ENCODE measurements at regions of chr10 and their contacts with region 1.

Region 1: DNA sequence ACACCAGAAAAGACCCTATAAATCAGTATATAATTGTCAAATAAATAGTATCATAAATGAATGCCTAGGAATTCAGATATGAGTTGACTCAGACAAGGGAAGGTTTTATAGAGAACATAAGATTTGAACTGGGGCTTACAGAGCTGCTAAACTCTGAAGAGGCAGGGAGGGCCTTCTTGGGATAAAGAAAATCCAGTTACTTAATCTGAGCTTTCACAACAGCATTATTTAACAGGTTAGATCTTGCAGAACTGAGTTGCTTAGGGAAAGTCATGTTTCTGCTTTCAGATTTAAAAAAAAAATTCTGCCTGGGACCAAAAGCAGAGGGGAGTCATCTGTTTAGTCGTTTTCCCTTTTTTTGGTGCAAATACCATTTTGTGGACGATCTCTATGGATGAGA is 594.8 kb upstream of the FZD8 start:
- DNase-seq: peak; percentile 28
- H3K4me3 ChIP-seq: no peak overlapping the region
- H3K27ac ChIP-seq: no peak overlapping the region
- H3K4me1 ChIP-seq: no peaks in the 10 kb centered on the region
- H3K27me3 ChIP-seq: no peaks in the 10 kb centered on the region
- CTCF ChIP-seq: no peak

Region 2: DNA sequence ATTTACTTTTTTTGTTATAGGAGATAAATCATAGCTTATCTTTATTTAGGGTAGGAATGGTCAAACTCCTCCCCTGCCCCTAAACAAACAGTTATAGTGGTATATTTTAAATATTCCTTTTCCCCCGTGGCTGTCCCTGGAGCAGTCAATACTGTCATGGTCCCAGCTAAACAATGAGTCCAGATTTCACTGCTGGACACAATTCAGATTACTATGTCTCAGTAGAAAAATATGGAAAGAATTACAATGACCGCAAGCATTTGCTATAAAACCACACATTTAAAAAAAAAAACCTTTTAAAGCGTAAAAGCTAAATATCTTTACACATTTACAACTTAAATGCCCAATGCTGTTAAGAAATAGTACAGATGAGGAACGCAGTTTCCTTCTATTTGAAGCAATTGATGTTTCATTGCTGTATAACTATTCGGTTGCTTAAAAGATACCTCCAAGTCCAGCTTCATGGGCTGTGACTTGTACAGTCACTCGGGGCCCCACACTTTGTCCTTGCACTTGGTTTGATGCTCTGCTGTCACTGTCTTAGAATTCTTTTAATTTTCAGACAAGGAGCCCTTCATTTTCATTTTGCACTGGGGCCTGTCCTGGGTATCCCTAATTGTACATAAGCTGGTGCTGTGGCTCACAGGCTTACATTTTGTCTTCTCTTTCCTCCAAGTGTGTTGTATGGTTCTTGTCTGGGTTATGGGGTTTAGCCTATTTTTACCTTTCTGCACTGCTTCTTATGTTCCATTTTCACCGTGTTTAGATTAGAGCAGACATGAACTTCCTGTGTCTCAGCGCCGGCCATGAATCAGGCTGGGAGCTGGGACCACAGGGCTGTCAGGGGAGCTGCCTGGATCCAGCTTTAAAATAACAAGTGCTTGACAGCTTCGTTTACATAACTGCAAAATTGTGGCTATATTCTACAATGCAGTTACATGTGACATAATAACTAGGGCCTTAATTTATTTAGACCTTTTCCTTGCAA is 64.7 kb before region 1 on chr10:
- CTCF ChIA-PET with region 1: no interaction called
- dilution Hi-C with region 1: no loop called
- in situ Hi-C with region 1: no loop called
- intact Hi-C with region 1: loop called (anchors 10 kb)
- DNase-seq: peak; percentile 64
- H3K4me3 ChIP-seq: peak overlapping the region in 1 of 3 experiments; percentile 18
- H3K27ac ChIP-seq: peak overlapping the region; percentile 61
- H3K4me1 ChIP-seq: peaks cover 27% of the 10 kb centered on the region
- H3K27me3 ChIP-seq: no peaks in the 10 kb centered on the region
- CTCF ChIP-seq: no peak

Region 3: DNA sequence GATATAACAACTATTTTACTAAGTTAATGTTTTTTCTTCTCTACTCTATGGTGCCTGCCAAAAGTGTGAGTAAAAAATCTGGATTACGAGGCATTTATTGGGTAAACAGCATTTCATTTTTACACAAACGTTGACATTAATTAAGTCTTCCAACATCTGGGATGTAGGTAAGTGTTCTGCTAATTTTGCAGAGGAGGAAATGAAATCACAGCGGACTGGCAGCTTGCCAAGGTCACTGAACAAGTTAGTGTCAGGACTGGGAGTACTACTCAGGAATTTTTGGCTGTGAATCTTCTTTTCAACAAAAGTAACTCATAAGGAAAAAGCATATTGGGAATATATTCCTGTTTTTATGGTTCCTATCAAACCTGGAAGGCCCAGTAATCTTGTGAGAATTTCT is 17.3 kb after region 1 on chr10:
- CTCF ChIA-PET with region 1: no interaction called
- dilution Hi-C with region 1: no loop called
- in situ Hi-C with region 1: no loop called
- intact Hi-C with region 1: no loop called
- DNase-seq: peak; percentile 45
- H3K4me3 ChIP-seq: no peak overlapping the region
- H3K27ac ChIP-seq: no peak overlapping the region
- H3K4me1 ChIP-seq: peaks cover 20% of the 10 kb centered on the region
- H3K27me3 ChIP-seq: no peaks in the 10 kb centered on the region
- CTCF ChIP-seq: no peak

Region 4: DNA sequence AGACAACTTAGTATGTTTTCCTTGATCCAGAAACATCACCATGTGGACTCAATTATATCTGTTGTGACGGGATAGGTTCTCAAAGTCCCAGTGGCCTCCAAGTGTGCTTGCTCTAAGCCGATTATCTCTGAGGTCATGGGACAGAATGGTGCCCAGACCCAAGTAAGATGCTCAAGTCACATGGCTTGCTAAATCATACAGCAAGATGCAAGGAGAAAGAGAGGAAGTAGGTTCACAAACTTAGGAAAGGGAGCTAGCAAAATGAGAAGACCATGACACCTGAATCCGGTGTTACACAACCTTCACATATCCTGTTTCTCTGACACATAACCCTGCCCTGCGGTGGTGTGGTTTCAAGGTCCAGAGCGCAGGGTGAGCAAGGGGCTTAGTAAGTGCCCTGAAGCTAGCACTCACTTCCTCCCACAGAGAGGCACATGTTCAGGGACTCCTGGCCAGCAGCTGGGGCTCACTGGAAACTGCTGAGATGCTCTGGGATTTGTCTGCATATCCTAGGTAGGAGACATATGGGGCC is 297.6 kb after region 1 on chr10:
- CTCF ChIA-PET with region 1: no interaction called
- dilution Hi-C with region 1: no loop called
- in situ Hi-C with region 1: no loop called
- intact Hi-C with region 1: no loop called
- DNase-seq: peak; percentile 99
- H3K4me3 ChIP-seq: no peak overlapping the region
- H3K27ac ChIP-seq: peak overlapping the region; percentile 65
- H3K4me1 ChIP-seq: peaks cover 25% of the 10 kb centered on the region
- H3K27me3 ChIP-seq: no peaks in the 10 kb centered on the region
- CTCF ChIP-seq: no peak

Measured in mammary epithelial cell (primary cell).